Activated naive CD4-positive, alpha-beta T cell treated with anti-CD3 and anti-CD28 coated beads, Interleukin-2, amount 10 ng/mL, durations not matched to agents 7 days and 5 days (primary cell): ENCODE measurements at regions of chr15 and their contacts with region 1.

Region 1: GRCh38 chr15:77013776-77014131 is 18.8 kb downstream of the PSTPIP1 start:
- DNase-seq: peak; percentile 90
- H3K4me3 Mint-ChIP-seq: peak overlapping the region; percentile 76
- H3K27ac Mint-ChIP-seq: peak overlapping the region; percentile 97
- H3K4me1 Mint-ChIP-seq: peaks cover 96% of the 10 kb centered on the region
- H3K27me3 Mint-ChIP-seq: no peaks in the 10 kb centered on the region

Region 2: DNA sequence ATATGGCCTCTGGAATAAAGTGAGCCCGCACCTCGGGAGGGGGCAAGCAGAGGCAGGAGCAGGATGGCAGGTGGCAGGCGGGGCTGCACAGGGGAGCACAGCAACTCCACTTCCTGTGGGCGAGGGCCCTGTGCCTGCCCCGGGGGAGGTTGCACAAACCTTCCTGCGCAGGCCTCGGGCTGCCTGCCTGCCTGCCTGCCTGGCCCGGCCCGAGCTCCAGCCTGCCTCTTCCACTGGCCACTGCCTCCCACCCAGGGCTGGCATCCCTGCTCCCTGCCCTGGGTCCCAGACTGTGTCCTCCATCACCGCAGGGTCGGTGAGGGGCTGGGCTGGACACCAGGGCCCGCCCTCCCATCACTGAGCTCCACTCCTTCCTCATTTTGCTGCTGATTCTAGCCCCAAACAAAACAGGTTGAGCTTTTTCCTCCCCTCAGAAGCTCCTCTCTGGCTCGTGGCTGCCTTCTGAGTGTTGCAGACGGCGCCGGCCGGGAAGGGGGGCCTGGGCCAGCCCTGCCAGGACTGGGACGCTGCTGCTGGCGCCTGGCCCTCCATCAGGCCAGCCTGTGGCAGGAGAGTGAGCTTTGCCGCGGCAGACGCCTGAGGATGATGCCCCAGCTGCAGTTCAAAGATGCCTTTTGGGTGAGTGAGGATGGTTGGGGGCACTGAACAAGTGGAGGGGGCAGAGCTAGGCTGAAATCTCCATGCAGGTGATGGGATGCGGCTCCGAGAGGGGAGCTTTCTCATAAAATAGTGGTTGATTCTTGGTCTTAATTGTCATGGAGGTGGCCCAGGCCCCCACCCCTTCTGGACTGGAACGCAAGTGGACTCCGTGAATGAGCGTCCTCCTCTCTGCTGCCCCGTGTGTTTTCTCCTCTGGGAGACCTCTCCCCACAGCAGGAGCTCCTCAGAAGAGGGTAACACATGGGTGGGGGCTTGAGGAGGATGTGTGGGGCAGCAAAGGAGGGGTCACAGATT is 18.5 kb before region 1 on chr15 and contains the start of gene PSTPIP1:
- CTCF ChIA-PET with region 1: interaction called, 26 read pairs
- DNase-seq: peak; percentile 84
- H3K4me3 Mint-ChIP-seq: peak within 1 kb of the TSS; percentile 94
- H3K27ac Mint-ChIP-seq: peak within 1 kb of the TSS; percentile 95
- H3K4me1 Mint-ChIP-seq: peaks cover 73% of the 10 kb centered on the region
- H3K27me3 Mint-ChIP-seq: no peaks in the 10 kb centered on the region